B cell (primary cell): ENCODE measurements at regions of chr18 and their contacts with region 1.

Region 1: GRCh38 chr18:46281185-46282176 is 177.3 kb downstream of the HAUS1 start:
- DNase-seq: peak; percentile 61
- ATAC-seq: peak; percentile 87
- H3K4me3 ChIP-seq: no peak overlapping the region
- H3K4me3 Mint-ChIP-seq: no peak overlapping the region
- H3K27ac ChIP-seq: no peak overlapping the region
- H3K27ac Mint-ChIP-seq: no peak overlapping the region
- H3K4me1 ChIP-seq: peaks cover 0 to 4% of the 10 kb centered on the region in 2 donors
- H3K4me1 Mint-ChIP-seq: peaks cover 6% of the 10 kb centered on the region
- H3K27me3 ChIP-seq: no peaks in the 10 kb centered on the region
- H3K27me3 Mint-ChIP-seq: no peaks in the 10 kb centered on the region
- CTCF ChIP-seq: peak; percentile 93

Region 2: GRCh38 chr18:46320928-46321711 is 39.6 kb after region 1 on chr18:
- CTCF ChIA-PET with region 1: no interaction called
- POLR2A ChIA-PET with region 1: no interaction called
- intact Hi-C with region 1: no loop called
- DNase-seq: no peak
- ATAC-seq: no peak
- H3K4me3 ChIP-seq: no peak overlapping the region
- H3K4me3 Mint-ChIP-seq: no peak overlapping the region
- H3K27ac ChIP-seq: no peak overlapping the region
- H3K27ac Mint-ChIP-seq: no peak overlapping the region
- H3K4me1 ChIP-seq: peaks cover 4 to 8% of the 10 kb centered on the region in 2 donors
- H3K4me1 Mint-ChIP-seq: peaks cover 8% of the 10 kb centered on the region
- H3K27me3 ChIP-seq: no peaks in the 10 kb centered on the region
- H3K27me3 Mint-ChIP-seq: peaks cover 4% of the 10 kb centered on the region
- CTCF ChIP-seq: no peak

Region 3: DNA sequence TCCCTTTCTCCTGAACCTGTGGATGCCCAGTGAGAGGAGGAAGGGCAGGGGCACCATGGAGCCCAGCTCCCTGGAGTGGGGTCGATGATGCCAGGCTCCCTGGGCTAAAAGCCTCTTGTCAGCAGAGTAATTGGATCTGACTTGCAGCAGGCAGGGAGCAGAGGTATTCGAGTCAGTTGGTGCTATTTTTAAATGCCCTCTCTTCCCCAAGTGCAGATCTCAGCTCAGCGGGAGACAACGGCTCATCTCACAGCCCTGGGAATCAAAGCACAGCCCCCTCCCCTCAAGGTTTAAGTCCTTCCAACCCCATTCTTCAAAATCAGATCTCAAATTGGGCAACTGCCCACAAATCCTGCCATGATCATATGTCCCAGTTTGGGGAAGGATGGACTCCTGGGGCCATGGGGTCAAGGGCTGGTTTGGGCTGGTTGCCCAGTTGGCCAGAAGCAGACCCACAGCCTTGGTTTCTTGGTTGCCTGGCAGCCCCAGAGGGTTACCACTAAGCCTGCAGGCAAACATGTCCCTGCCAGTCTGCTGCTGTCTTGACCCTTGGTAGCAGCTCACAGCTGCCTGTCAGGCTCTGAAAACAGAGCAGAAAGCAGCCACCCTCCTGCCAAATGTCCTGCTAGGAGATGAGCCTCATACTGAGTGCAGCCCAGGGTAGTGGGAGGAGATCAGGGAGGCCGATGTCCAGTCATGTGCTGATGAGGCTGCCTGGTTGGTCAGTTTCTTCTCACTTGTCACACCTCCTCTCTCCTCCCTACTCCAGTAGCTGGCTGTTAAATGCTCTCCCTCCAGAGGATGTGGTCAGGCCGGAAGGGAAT is 130.6 kb after region 1 on chr18:
- CTCF ChIA-PET with region 1: no interaction called
- POLR2A ChIA-PET with region 1: no interaction called
- intact Hi-C with region 1: no loop called
- DNase-seq: no peak
- ATAC-seq: no peak
- H3K4me3 ChIP-seq: no peak overlapping the region
- H3K4me3 Mint-ChIP-seq: no peak overlapping the region
- H3K27ac ChIP-seq: no peak overlapping the region
- H3K27ac Mint-ChIP-seq: no peak overlapping the region
- H3K4me1 ChIP-seq: no peaks in the 10 kb centered on the region
- H3K4me1 Mint-ChIP-seq: no peaks in the 10 kb centered on the region
- H3K27me3 ChIP-seq: no peaks in the 10 kb centered on the region
- H3K27me3 Mint-ChIP-seq: peaks cover 8% of the 10 kb centered on the region
- CTCF ChIP-seq: no peak

Region 4: GRCh38 chr18:46481048-46481846 is 199.8 kb after region 1 on chr18:
- CTCF ChIA-PET with region 1: interaction called, 31 read pairs
- POLR2A ChIA-PET with region 1: no interaction called
- intact Hi-C with region 1: no loop called
- DNase-seq: peak; percentile 51
- ATAC-seq: peak; percentile 14
- H3K4me3 ChIP-seq: no peak overlapping the region
- H3K4me3 Mint-ChIP-seq: no peak overlapping the region
- H3K27ac ChIP-seq: no peak overlapping the region
- H3K27ac Mint-ChIP-seq: no peak overlapping the region
- H3K4me1 ChIP-seq: no peaks in the 10 kb centered on the region
- H3K4me1 Mint-ChIP-seq: no peaks in the 10 kb centered on the region
- H3K27me3 ChIP-seq: no peaks in the 10 kb centered on the region
- H3K27me3 Mint-ChIP-seq: peaks cover 25% of the 10 kb centered on the region
- CTCF ChIP-seq: peak; percentile 76